Activated CD8-positive, alpha-beta memory T cell treated with anti-CD3 and anti-CD28 coated beads, Interleukin-2, amount 10 ng/mL, durations not matched to agents 7 days and 5 days (primary cell): ENCODE measurements at regions of chr10 and their contacts with region 1.

Region 1: GRCh38 chr10:79243181-79244067 is 103.8 kb upstream of the PPIF start:
- DNase-seq: peak; percentile 87
- ATAC-seq: peak; percentile 80
- H3K4me3 Mint-ChIP-seq: peak overlapping the region; percentile 92
- H3K27ac Mint-ChIP-seq: peak overlapping the region; percentile 99
- H3K4me1 Mint-ChIP-seq: peaks cover 62% of the 10 kb centered on the region
- H3K27me3 Mint-ChIP-seq: no peaks in the 10 kb centered on the region

Region 2: DNA sequence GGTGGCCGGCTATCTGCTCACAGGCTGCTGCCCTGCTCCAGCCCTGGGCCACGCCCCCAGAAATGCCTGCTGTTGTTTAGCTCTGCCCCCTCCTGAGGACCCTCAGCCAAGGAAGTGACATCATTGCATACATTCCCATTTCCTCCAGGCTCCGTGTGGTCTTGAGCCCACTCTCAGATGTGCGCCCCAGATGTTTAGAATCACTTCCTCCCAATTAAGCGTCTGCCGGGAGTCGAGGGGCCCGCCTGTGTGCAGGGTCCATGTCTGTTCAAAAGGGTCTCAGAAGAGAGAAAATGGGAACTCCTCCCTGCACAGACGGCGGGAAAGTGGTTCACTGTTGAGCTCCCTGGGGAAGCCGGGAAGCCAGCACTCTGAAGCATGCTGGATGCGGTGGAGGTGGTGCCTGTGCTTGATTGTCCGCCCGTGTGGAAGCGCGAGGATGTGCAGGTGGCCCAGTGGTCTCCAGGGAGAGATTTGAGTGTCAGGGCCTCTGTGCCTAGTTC is 13.0 kb before region 1 on chr10:
- CTCF ChIA-PET with region 1: no interaction called
- DNase-seq: no peak
- ATAC-seq: no peak
- H3K4me3 Mint-ChIP-seq: no peak overlapping the region
- H3K27ac Mint-ChIP-seq: no peak overlapping the region
- H3K4me1 Mint-ChIP-seq: no peaks in the 10 kb centered on the region
- H3K27me3 Mint-ChIP-seq: no peaks in the 10 kb centered on the region

Region 3: GRCh38 chr10:79316671-79317431 is 73.4 kb after region 1 on chr10:
- CTCF ChIA-PET with region 1: interaction called, 10 read pairs
- DNase-seq: peak; percentile 74
- ATAC-seq: peak; percentile 69
- H3K4me3 Mint-ChIP-seq: peak overlapping the region; percentile 74
- H3K27ac Mint-ChIP-seq: peak overlapping the region; percentile 94
- H3K4me1 Mint-ChIP-seq: peaks cover 60% of the 10 kb centered on the region
- H3K27me3 Mint-ChIP-seq: no peaks in the 10 kb centered on the region